Endothelial cell of umbilical vein (primary cell): ENCODE measurements at regions of chr17 and their contacts with region 1.

Region 1: GRCh38 chr17:58463821-58464220 is 24.4 kb downstream of the HSF5 start:
- DNase-seq: no peak
- H3K4me3 ChIP-seq: no peak overlapping the region
- H3K27ac ChIP-seq: no peak overlapping the region
- H3K4me1 ChIP-seq: no peaks in the 10 kb centered on the region
- H3K27me3 ChIP-seq: peaks cover 3 to 5% of the 10 kb centered on the region in 2 experiments
- CTCF ChIP-seq: no peak
- POLR2A ChIP-seq: no peak

Region 2: GRCh38 chr17:58476812-58477211 is 13.0 kb after region 1 on chr17:
- CTCF ChIA-PET with region 1: no interaction called
- POLR2A ChIA-PET with region 1: no interaction called
- dilution Hi-C with region 1: no loop called
- intact Hi-C with region 1: no loop called
- DNase-seq: no peak
- H3K4me3 ChIP-seq: no peak overlapping the region
- H3K27ac ChIP-seq: no peak overlapping the region
- H3K4me1 ChIP-seq: no peaks in the 10 kb centered on the region
- H3K27me3 ChIP-seq: peaks cover 0 to 2% of the 10 kb centered on the region in 2 experiments
- CTCF ChIP-seq: no peak
- POLR2A ChIP-seq: no peak

Region 3: GRCh38 chr17:59230764-59231163 is 766.9 kb after region 1 on chr17:
- CTCF ChIA-PET with region 1: no interaction called
- POLR2A ChIA-PET with region 1: interaction called, 11 read pairs
- dilution Hi-C with region 1: no loop called
- intact Hi-C with region 1: no loop called
- DNase-seq: no peak
- H3K4me3 ChIP-seq: no peak overlapping the region
- H3K27ac ChIP-seq: no peak overlapping the region
- H3K4me1 ChIP-seq: no peaks in the 10 kb centered on the region
- H3K27me3 ChIP-seq: no peaks in the 10 kb centered on the region
- CTCF ChIP-seq: no peak
- POLR2A ChIP-seq: no peak